RWPE1 (cell line): ENCODE measurements at regions of chr20 and their contacts with region 1.

Region 1: GRCh38 chr20:32091888-32092346 is 17.6 kb upstream of the TM9SF4 start:
- DNase-seq: peak; percentile 79
- H3K27ac ChIP-seq: no peak overlapping the region
- CTCF ChIP-seq: peak; percentile 98

Region 2: DNA sequence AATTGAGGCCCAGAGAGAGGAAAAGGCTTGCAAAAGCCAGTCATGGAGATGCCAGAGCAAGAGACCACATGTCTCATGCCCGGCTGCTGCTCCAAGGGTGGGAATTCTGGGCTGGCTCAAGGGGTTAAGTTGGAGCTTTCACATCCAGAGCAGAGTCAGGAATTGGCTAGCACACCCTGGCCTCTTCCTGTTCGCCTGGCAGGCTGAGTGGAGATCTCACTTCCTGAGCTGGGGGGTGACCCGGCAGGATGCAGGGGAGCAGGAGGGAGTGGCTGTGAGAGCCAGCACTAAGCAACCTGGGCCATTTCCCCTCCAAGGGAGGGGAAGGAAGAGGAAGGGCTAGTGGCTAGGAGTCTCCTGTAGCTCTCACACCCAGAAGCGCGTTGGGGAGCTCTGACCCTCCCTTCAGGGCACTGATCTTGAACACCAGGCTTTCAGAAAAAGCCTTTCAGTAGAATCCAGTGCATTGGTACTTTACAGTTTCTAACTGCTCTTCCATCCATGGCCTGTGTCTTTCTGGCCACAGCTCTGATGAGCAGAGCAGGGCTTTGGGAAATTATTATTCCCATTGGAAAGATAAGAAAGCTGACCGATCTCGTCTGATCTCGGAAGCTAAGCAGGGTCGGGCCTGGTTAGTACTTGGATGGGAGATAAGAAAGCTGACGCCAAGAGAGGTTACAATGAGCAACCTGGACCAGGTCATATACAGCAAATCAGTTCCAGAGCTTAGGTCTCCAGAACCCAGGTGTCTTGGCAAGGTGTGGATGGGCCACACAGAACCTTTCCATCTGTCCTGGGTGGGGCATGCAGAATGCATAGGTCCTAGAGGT is 83.9 kb before region 1 on chr20:
- CTCF ChIA-PET with region 1: no interaction called
- POLR2A ChIA-PET with region 1: no interaction called
- DNase-seq: no peak
- H3K27ac ChIP-seq: no peak overlapping the region
- CTCF ChIP-seq: no peak

Region 3: DNA sequence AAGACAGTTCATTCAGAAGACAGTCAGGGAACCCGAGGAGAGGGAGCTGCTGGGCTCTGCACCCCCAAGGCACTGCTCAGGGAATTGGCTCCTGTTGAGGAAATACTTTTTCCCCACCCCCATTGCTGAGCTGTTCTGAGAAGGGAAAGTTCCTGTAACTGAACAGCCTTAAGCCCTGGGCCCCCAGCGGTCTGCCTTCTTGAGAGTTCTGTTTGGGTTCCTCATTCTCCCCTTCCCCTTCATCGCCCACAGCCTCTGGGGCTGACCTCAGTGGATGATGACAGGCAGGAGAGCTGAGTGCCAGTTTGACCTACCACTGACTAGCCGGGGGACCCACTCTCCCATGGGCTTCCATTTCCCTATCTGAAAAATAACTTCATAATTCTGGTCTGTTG is 29.1 kb before region 1 on chr20:
- CTCF ChIA-PET with region 1: interaction called, 14 read pairs
- POLR2A ChIA-PET with region 1: no interaction called
- DNase-seq: no peak
- H3K27ac ChIP-seq: no peak overlapping the region
- CTCF ChIP-seq: no peak

Region 4: DNA sequence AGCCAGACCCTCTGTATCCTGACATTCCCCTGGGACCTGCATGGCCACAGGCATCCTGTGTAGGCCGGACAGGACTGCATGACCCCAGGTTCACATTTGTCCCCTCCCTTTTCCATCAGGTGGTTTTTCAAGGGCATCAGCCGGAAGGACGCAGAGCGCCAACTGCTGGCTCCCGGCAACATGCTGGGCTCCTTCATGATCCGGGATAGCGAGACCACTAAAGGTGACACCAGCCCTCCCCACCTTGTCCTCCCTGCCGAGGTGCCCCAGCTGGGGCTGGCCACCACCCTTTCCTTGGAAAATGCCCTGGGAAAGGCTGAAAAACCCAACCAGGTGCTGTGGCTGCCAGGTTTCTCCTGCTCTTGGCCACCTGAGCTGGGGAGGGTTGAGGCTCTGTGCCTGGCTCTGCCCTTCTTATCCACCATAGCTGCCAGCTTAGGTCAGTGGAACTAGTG is 12.2 kb before region 1 on chr20:
- CTCF ChIA-PET with region 1: interaction called, 26 read pairs
- POLR2A ChIA-PET with region 1: no interaction called
- DNase-seq: no peak
- H3K27ac ChIP-seq: no peak overlapping the region
- CTCF ChIP-seq: no peak

Region 5: GRCh38 chr20:32110173-32110704 is 18.3 kb after region 1 on chr20:
- CTCF ChIA-PET with region 1: no interaction called
- POLR2A ChIA-PET with region 1: no interaction called
- DNase-seq: no peak
- H3K27ac ChIP-seq: peak overlapping the region; percentile 89
- CTCF ChIP-seq: no peak

Region 6: DNA sequence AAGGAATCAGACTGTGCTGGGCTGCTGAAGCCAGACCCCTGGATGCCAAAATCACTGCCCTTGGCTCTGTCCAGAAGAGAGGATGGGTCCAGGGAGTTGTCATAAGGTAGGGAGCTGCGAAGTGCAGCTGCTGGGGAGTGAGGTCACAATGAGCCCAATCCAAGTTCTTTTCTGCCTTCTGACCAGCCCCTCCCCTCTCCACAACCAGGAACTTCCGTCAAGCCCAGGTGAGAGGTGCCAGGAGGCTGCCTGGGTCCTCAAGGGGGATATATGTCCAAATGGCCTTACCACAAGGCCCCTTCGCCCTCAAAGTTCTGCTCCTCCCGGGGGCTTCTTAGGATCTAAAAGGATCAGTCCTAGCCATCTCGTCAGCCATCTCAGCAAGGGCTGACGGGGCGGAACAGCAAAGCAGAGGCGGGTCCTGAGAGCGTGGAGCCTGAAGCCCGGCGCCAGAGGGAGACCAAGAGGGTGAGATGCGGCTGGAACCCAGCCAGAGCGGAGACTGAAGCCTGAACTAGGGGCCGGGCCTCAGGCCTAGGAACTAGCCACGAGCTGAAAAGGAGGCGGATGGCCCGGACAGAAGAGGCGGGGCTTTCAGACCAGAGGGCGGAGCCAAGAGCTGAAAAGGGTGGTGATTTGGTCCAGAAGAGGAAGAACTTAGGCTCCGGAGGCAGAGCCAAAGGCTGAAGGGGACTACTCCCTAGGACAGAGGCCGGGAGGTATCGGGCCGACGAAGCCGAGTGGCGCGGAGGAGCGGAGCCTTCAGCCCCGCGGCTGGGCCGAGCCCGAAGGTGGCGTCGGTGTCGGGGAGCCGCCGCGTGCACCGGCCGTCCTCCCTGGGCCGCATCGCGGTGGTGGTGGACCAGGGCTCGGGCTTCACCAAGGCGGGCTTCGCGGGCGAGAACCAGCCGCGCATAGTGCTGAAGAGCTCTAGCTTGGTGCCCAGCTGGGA is 1574.7 kb after region 1 on chr20 and contains the start of gene ACTL10:
- CTCF ChIA-PET with region 1: no interaction called
- POLR2A ChIA-PET with region 1: no interaction called
- DNase-seq: peak; percentile 99
- H3K27ac ChIP-seq: peak within 1 kb of the TSS; percentile 88
- CTCF ChIP-seq: peak; percentile 45; the same call in 1 of the 2 replicates